Naive thymus-derived CD4-positive, alpha-beta T cell (primary cell): ENCODE measurements at regions of chr7 and their contacts with region 1.

Region 1: GRCh38 chr7:158704704-158705468 is at the start of gene NCAPG2:
- DNase-seq: peak; percentile 94 to 98 (median 97)
- ATAC-seq: peak; percentile 99
- H3K4me3 ChIP-seq: peak within 1 kb of the TSS; percentile 88
- H3K4me3 Mint-ChIP-seq: peak within 1 kb of the TSS; percentile 66 to 88 (median 85)
- H3K27ac ChIP-seq: peak within 1 kb of the TSS; percentile 82
- H3K27ac Mint-ChIP-seq: peak within 1 kb of the TSS; percentile 46 to 91 (median 81)
- H3K4me1 ChIP-seq: peaks cover 12 to 15% of the 10 kb centered on the region in 2 donors
- H3K4me1 Mint-ChIP-seq: peaks cover 11 to 45% (median 15%) of the 10 kb centered on the region in 7 donors
- H3K27me3 ChIP-seq: no peaks in the 10 kb centered on the region
- H3K27me3 Mint-ChIP-seq: no peaks in the 10 kb centered on the region
- total RNA-seq, gene NCAPG2: 6.0 to 88.7 (median 8.8) TPM

Region 2: GRCh38 chr7:157138424-157139110 is 1566.3 kb before region 1 on chr7 and contains the start of gene UBE3C:
- CTCF ChIA-PET with region 1: no interaction called
- POLR2A ChIA-PET with region 1: no interaction called
- intact Hi-C with region 1: loop called in 1 of 2 experiments (anchors 5 kb)
- DNase-seq: peak; percentile 88 to 96 (median 93)
- ATAC-seq: peak; percentile 91
- H3K4me3 ChIP-seq: peak within 1 kb of the TSS; percentile 82
- H3K4me3 Mint-ChIP-seq: peak within 1 kb of the TSS; percentile 77 to 93 (median 84)
- H3K27ac ChIP-seq: peak within 1 kb of the TSS; percentile 92
- H3K27ac Mint-ChIP-seq: peak within 1 kb of the TSS; percentile 76 to 99 (median 93)
- H3K4me1 ChIP-seq: peaks cover 35 to 43% of the 10 kb centered on the region in 2 donors
- H3K4me1 Mint-ChIP-seq: peaks cover 26 to 45% (median 42%) of the 10 kb centered on the region in 7 donors
- H3K27me3 ChIP-seq: no peaks in the 10 kb centered on the region
- H3K27me3 Mint-ChIP-seq: peaks cover 0 to 2% (median 0%) of the 10 kb centered on the region in 5 donors
- total RNA-seq, gene UBE3C: 41.6 to 64.6 (median 54.9) TPM

Region 3: DNA sequence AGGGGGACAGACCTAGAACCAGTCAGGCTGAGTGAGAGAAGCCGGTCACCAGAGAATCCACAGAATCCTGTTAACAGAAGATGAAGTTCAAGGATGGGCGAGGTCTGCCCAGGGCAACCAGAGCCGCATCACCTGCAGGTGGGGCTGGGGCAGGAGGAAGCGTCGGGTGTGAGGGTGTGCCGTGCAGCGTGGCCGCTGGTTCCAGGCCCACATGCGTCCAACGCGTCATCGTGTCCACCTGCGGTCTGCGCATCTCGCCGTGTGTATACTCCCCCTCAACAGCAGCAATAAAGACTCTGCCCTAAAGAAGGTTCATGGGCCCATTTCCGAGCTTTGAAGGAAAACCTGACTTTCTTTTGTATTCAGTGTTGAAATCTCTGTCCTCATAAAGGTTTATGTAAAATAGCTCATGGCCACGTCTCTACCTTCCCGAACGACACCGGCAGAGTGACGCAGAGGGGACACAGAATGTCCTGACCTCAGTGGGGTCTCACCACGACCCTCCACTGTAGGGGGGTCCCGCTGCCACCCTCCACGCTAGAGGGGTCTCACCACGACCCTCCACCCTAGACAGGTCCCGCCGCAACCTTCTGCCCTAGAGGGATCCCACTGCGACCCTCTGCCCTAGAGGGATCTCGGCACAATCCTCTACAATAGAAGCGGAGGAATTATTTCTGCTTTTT is 564.2 kb before region 1 on chr7:
- CTCF ChIA-PET with region 1: no interaction called
- POLR2A ChIA-PET with region 1: no interaction called
- intact Hi-C with region 1: no loop called
- DNase-seq: no peak
- ATAC-seq: no peak
- H3K4me3 ChIP-seq: no peak overlapping the region
- H3K4me3 Mint-ChIP-seq: no peak overlapping the region
- H3K27ac ChIP-seq: no peak overlapping the region
- H3K27ac Mint-ChIP-seq: no peak overlapping the region
- H3K4me1 ChIP-seq: no peaks in the 10 kb centered on the region
- H3K4me1 Mint-ChIP-seq: no peaks in the 10 kb centered on the region
- H3K27me3 ChIP-seq: no peaks in the 10 kb centered on the region
- H3K27me3 Mint-ChIP-seq: peaks cover 0 to 2% (median 0%) of the 10 kb centered on the region in 5 donors

Region 4: GRCh38 chr7:158754746-158755444 is 50.0 kb after region 1 on chr7:
- CTCF ChIA-PET with region 1: no interaction called
- POLR2A ChIA-PET with region 1: no interaction called
- intact Hi-C with region 1: loop called in 1 of 2 experiments (anchors 5 kb)
- DNase-seq: no peak
- ATAC-seq: no peak
- H3K4me3 ChIP-seq: no peak overlapping the region
- H3K4me3 Mint-ChIP-seq: no peak overlapping the region
- H3K27ac ChIP-seq: no peak overlapping the region
- H3K27ac Mint-ChIP-seq: peak overlapping the region in 4 of 9 donors; percentile 26 to 60 (median 33)
- H3K4me1 ChIP-seq: no peaks in the 10 kb centered on the region
- H3K4me1 Mint-ChIP-seq: peaks cover 0 to 12% (median 0%) of the 10 kb centered on the region in 7 donors
- H3K27me3 ChIP-seq: no peaks in the 10 kb centered on the region
- H3K27me3 Mint-ChIP-seq: no peaks in the 10 kb centered on the region

Region 5: GRCh38 chr7:158782761-158783401 is 78.0 kb after region 1 on chr7:
- CTCF ChIA-PET with region 1: no interaction called
- POLR2A ChIA-PET with region 1: interaction called, 11 read pairs
- intact Hi-C with region 1: no loop called
- DNase-seq: no peak
- ATAC-seq: peak; percentile 49
- H3K4me3 ChIP-seq: no peak overlapping the region
- H3K4me3 Mint-ChIP-seq: no peak overlapping the region
- H3K27ac ChIP-seq: peak overlapping the region; percentile 34
- H3K27ac Mint-ChIP-seq: no peak overlapping the region
- H3K4me1 ChIP-seq: peaks cover 7 to 41% of the 10 kb centered on the region in 2 donors
- H3K4me1 Mint-ChIP-seq: peaks cover 4 to 14% (median 8%) of the 10 kb centered on the region in 7 donors
- H3K27me3 ChIP-seq: no peaks in the 10 kb centered on the region
- H3K27me3 Mint-ChIP-seq: no peaks in the 10 kb centered on the region

Region 6: DNA sequence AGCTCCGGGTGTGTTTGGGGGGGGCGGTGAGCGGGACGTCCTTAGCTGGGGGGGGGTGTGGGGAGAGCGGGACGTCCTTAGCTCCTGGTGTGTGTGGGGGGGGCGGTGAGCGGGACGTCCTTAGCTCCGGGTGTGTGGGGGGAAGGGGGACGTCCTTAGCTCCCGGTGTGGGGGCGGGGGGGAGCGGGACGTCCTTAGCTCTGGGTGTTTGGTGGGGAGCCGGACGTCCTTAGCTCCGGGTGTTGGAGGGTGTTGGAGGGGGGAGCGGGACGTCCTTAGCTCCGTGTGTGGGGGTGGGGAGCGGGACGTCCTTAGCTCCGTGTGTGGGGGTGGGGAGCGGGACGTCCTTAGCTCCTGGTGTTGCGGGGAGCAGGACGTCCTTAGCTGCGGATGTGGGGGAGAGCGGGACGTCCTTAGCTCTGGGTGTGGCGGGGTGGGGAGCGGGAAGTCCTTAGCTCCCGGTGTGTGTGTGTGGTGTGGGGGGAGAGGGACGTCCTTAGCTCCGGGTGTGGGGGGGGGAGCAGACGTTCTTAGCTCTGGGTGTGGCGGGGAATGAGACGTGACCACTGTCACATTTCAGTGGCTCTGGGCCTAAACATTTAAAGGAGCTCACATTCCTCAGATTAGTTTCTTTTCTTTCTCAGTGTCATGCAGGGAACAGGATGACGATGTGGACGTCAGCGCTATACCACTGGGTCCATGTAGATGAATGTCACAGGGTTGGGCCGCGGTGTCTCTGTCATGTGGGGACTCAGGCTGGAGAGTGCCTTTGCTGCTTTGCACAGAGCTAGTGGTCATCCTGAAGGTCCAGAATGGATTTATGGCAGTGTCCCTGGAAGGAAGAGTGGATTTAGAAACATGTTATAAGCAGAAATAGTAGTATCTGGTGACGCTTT is 159.0 kb after region 1 on chr7:
- CTCF ChIA-PET with region 1: no interaction called
- POLR2A ChIA-PET with region 1: interaction called, 10 read pairs
- intact Hi-C with region 1: no loop called
- DNase-seq: peak in 8 of 9 donors; percentile 23 to 50 (median 40)
- ATAC-seq: peak; percentile 77
- H3K4me3 ChIP-seq: peak overlapping the region; percentile 44
- H3K4me3 Mint-ChIP-seq: peak overlapping the region; percentile 86 to 98 (median 90)
- H3K27ac ChIP-seq: peak overlapping the region; percentile 62
- H3K27ac Mint-ChIP-seq: peak overlapping the region; percentile 85 to 98 (median 94)
- H3K4me1 ChIP-seq: peaks cover 0 to 22% of the 10 kb centered on the region in 2 donors
- H3K4me1 Mint-ChIP-seq: peaks cover 15 to 72% (median 62%) of the 10 kb centered on the region in 7 donors
- H3K27me3 ChIP-seq: no peaks in the 10 kb centered on the region
- H3K27me3 Mint-ChIP-seq: no peaks in the 10 kb centered on the region